OCI-LY7 (cell line): ENCODE measurements at regions of chr18 and their contacts with region 1.

Region 1: GRCh38 chr18:35789543-35789942 is 182.9 kb upstream of the RMP24 start:
- DNase-seq: no peak
- H3K4me3 ChIP-seq: no peak overlapping the region
- H3K27ac ChIP-seq: no peak overlapping the region
- H3K4me1 ChIP-seq: peaks cover 21% of the 10 kb centered on the region
- CTCF ChIP-seq: no peak

Region 2: DNA sequence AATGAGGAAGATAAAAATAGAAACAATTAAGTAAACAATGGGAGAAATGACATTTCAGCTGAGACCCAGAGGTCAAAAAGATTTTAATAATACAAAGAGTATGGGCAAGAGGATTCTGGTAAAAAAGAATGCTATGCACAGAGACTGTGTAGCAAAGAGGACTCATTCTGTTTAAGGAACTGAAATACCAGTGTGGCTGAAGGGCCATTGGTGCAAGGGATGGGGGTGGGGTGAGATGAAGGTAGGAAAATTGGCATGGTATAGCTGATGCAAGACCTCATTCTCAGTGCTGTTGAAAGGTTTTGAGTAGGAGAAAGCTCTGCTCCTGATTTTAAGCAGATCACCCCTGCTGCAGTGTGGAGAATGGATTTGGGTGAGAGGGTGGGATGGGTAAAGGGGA is 197.2 kb before region 1 on chr18:
- CTCF ChIA-PET with region 1: no interaction called
- POLR2A ChIA-PET with region 1: no interaction called
- intact Hi-C with region 1: no loop called
- DNase-seq: peak; percentile 79
- H3K4me3 ChIP-seq: peak overlapping the region; percentile 59
- H3K27ac ChIP-seq: peak overlapping the region; percentile 69
- H3K4me1 ChIP-seq: peaks cover 51% of the 10 kb centered on the region
- CTCF ChIP-seq: no peak

Region 3: GRCh38 chr18:35803551-35803950 is 14.0 kb after region 1 on chr18:
- CTCF ChIA-PET with region 1: no interaction called
- POLR2A ChIA-PET with region 1: no interaction called
- intact Hi-C with region 1: no loop called
- DNase-seq: no peak
- H3K4me3 ChIP-seq: no peak overlapping the region
- H3K27ac ChIP-seq: no peak overlapping the region
- H3K4me1 ChIP-seq: no peaks in the 10 kb centered on the region
- CTCF ChIP-seq: no peak

Region 4: DNA sequence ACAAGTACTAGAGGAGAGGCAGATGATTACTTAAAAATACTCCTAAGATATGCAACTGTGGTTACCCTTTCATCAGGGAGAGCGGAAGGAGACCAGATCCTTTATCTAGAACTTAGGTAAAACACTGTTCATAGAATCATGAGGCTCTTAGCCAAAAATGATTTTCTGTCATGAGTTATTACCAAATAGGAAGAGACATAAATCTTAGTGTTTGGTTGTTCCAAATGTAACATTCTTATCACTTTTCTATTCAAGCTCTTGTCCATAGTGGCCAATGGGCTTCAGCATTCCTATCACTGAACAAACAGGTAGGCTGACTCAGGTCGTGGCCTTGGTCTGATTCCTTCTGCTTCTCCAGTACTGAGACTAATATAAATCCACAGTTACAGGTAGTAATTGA is 239.3 kb after region 1 on chr18:
- CTCF ChIA-PET with region 1: no interaction called
- POLR2A ChIA-PET with region 1: interaction called, 10 read pairs
- intact Hi-C with region 1: no loop called
- DNase-seq: no peak
- H3K4me3 ChIP-seq: no peak overlapping the region
- H3K27ac ChIP-seq: no peak overlapping the region
- H3K4me1 ChIP-seq: peaks cover 32% of the 10 kb centered on the region
- CTCF ChIP-seq: no peak